ENCODE measurements at regions of chr11 and their contacts with region 1.

Region 1: DNA sequence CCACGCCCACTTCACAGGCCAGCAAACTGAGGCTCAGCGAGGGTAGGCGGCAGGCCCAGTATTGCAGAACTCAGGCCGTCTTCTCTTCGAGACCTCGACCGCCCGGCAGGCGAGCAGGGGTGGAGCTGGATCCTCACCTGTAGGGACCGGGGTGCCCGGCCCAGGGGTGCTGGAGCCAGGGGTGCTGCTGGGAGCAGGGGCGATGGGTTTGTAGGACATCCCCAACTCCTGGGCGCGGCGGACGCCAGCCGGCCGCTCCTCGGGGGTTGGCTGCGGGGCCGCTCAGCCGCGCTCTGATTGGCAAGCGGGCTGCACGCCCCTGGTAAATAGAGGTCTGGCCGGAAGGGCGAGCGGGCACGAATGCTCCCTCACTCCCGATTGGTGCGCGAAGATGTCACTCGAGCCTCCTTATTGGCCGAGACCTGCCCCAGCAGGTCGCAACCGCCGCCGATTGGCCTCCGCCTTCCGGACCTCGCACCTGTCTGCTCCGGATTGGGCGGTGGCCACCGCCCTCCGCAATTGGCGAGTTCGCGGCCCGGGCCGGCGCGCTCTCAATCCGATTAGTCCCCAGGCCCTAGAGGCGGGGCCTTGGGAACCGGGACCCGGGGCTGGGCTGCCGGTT is at the start of gene CDK2AP2:
- DNase-seq: peak; percentile 100
- H3K4me3 ChIP-seq: peak within 1 kb of the TSS; percentile 66 to 81 (median 76)
- H3K27ac ChIP-seq: peak within 1 kb of the TSS; percentile 96 to 99 (median 97)
- H3K4me1 ChIP-seq: peaks cover 0 to 57% (median 48%) of the 10 kb centered on the region in 4 donors
- H3K27me3 ChIP-seq: peaks cover 9 to 31% (median 26%) of the 10 kb centered on the region in 3 donors
- CTCF ChIP-seq: no peak
- EP300 ChIP-seq: no peak
- POLR2A ChIP-seq: peak; percentile 71 to 93
- total RNA-seq, gene CDK2AP2: 13.3 to 32.9 (median 23.7) TPM

Region 2: DNA sequence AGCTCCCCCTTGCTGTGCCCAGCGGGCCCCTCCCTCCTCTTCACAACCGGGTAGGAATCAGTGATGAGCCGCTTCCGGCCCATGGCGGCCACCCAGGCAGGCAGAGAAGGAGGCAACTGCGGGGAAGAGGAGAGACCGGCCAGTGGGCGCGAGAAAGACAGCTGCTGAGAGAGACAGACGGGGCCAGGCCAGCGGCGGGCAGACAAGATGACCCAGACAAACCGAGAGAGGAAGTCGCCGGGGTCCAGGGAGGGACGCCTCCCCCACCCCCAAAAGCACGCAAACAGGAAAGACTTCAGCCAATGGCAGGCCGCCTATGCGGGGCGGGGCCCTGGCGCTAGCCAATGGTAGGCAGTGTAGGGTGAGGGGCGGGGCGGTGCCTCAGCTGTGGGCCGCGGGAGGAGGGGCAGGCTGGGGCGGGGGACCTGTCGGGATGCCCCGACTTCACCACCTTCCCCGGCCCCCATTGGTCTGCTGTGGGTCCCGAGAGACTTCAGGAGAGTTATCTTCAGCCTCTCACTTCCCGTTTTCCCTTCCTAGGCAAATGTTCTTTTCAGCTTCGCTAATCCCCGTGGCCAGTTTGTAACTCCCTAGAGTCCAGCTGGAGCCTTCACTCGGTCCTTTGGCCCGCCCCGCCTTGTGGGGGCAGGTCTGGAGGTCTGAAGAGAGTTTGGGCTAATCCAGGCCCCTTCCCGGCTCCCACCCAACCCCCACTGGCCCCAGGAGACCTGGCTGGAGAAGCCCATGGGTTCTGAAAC is 154.5 kb before region 1 on chr11 and contains the start of gene POLD4:
- intact Hi-C with region 1: loop called (anchors 2 kb)
- DNase-seq: peak; percentile 99
- H3K4me3 ChIP-seq: peak within 1 kb of the TSS; percentile 71 to 85 (median 76)
- H3K27ac ChIP-seq: peak within 1 kb of the TSS; percentile 95 to 100 (median 98)
- H3K4me1 ChIP-seq: peaks cover 3 to 74% (median 72%) of the 10 kb centered on the region in 4 donors
- H3K27me3 ChIP-seq: no peaks in the 10 kb centered on the region
- CTCF ChIP-seq: no peak
- EP300 ChIP-seq: no peak
- POLR2A ChIP-seq: peak; percentile 79 to 88
- total RNA-seq, gene POLD4: 48.5 to 78.9 (median 67.0) TPM

Region 3: GRCh38 chr11:67428052-67428914 is 79.7 kb before region 1 on chr11 and contains the start of gene RPS6KB2:
- intact Hi-C with region 1: loop called (anchors 5 kb)
- DNase-seq: peak; percentile 99
- H3K4me3 ChIP-seq: peak within 1 kb of the TSS; percentile 66 to 91 (median 72)
- H3K27ac ChIP-seq: peak within 1 kb of the TSS; percentile 87 to 92 (median 90)
- H3K4me1 ChIP-seq: peaks cover 0 to 19% (median 18%) of the 10 kb centered on the region in 4 donors
- H3K27me3 ChIP-seq: no peaks in the 10 kb centered on the region
- CTCF ChIP-seq: no peak
- EP300 ChIP-seq: peak in 1 of 4 donors; percentile 85
- POLR2A ChIP-seq: peak; percentile 93 to 94
- total RNA-seq, gene RPS6KB2: 27.1 to 70.2 (median 35.2) TPM

Region 4: GRCh38 chr11:67482825-67483798 is 24.9 kb before region 1 on chr11 and contains the start of gene AIP:
- intact Hi-C with region 1: loop called (anchors 2 kb)
- DNase-seq: peak; percentile 99
- H3K4me3 ChIP-seq: peak within 1 kb of the TSS; percentile 36 to 59 (median 51)
- H3K27ac ChIP-seq: peak within 1 kb of the TSS; percentile 81 to 87 (median 82)
- H3K4me1 ChIP-seq: peaks cover 0 to 37% (median 24%) of the 10 kb centered on the region in 4 donors
- H3K27me3 ChIP-seq: no peaks in the 10 kb centered on the region
- CTCF ChIP-seq: peak in 1 of 4 experiments; percentile 50
- EP300 ChIP-seq: no peak
- POLR2A ChIP-seq: peak; percentile 42 to 56
- total RNA-seq, gene AIP: 103 to 120 (median 109) TPM

Region 5: GRCh38 chr11:67674442-67674901 is 166.5 kb after region 1 on chr11 and contains the start of gene ALDH3B2:
- intact Hi-C with region 1: no loop called
- DNase-seq: no peak
- H3K4me3 ChIP-seq: no peak within 1 kb of the TSS
- H3K27ac ChIP-seq: no peak within 1 kb of the TSS
- H3K4me1 ChIP-seq: no peaks in the 10 kb centered on the region
- H3K27me3 ChIP-seq: peaks cover 0 to 8% (median 0%) of the 10 kb centered on the region in 3 donors
- CTCF ChIP-seq: no peak
- EP300 ChIP-seq: no peak
- POLR2A ChIP-seq: no peak
- total RNA-seq, gene ALDH3B2: not detected

Measured in sigmoid colon (tissue), 7 donors.